ENCODE measurements at regions of chr2 and their contacts with region 1.

Region 1: DNA sequence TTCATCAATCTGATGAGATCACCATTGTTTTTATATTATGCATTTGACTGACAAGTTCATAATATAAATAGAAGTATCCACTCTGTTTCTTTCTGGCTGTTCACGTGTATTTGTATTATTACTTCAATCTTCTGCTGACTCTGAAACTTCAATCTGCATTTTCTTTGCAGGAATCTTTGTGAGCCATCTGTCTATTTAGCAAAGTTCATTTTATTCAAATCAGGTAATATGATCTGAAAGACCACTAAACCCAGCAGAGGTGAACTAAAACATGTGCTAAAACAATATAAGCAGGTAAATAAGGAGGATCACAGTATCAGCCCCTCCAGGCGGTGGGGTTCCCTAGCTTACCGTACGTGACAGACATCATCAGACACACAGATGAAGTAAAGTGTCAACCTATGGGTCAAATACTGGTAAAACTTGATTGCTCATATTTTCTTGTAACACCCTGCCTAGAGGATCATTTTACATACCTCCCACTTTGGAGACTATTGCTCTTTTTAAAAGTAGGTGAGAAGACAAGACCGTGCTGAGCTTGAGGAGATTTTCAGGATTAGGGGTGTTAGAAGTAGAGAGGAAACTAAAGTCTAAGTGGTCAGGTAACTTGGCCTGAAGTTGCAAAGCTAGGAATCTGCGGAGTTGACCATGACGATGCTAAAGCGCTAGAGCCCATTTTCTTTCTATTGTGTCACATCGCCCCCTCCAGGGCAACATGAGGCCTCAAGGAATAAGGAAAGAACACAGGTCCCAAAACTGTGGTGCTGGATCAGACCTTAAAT is 9.0 kb downstream of the DTNB start:
- DNase-seq: peak; percentile 50
- ATAC-seq: peak; percentile 57

Region 2: DNA sequence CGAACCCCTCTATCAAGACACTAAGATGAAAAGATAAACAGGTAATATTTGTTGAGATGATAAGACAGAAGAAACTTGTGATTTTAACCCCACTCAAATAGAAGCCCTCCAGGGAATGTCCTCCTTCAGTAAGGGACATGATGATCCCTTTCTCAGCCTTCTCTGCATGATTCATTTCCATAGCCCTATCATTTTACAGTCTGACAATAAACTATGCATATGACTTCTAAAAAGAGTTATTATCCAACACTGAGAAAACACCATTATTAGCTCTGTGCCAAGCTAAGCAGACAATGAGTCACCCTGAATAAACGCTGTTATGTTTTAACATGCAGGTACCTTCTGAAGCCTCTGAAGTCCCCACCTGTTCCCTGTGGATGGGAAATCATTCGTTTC is 45.7 kb before region 1 on chr2:
- intact Hi-C with region 1: loop called (anchors 10 kb)
- DNase-seq: no peak
- ATAC-seq: no peak